Left ventricle myocardium inferior (tissue), 1 donor: ENCODE measurements at regions of chr17 and their contacts with region 1.

Region 1: DNA sequence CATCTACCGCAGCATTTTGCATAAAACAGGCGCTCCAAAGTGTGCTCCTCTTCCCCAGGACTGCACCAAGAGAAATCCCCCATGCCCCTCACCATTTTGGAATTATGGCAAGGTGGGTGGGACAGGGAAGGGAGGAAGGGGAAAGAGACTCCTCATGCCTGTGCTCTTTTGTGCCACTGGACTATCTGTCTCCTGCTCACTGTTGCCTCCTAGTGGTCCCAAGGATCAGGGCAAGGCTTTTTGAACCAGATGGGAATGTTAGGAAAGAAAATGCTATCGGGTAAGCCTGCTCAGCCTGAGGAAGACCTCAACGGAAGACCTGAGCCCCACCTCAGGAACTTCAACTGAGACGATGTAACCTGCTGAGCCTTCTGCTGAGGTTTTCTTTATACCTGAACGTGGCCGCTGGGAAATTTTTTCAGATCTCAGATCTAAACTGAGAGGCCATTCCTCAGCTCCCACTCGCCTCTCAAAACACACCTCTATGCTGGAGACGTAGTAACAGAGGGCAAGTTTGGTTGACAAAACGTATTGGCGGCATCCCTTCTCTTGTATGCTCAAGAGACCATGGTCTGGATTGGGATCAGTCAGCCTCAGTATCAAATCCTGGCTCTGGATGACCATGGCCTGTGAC is 58.3 kb downstream of the SPACA3 start:
- DNase-seq: no peak
- H3K4me3 ChIP-seq: no peak overlapping the region
- H3K27ac ChIP-seq: no peak overlapping the region
- H3K4me1 ChIP-seq: no peaks in the 10 kb centered on the region
- H3K27me3 ChIP-seq: peaks cover 47% of the 10 kb centered on the region
- CTCF ChIP-seq: peak; percentile 82

Region 2: DNA sequence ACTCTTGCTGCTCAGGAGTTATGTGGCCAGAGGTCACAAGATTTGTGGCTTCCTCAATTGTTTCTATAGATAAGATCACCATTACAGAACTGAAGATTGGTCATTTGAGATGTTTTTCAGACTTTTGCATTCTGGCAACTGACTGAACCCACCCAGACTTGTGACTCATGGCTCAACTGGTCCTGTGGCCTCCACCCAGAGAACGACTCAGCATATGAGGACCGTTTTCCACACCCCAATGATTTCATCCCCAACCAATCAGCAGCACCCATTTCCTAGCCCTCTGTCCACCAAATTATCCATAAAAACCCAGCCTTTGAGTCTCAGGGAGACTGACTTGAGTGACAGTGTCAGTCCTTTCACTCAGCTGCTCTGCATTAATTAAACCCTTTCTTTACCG is 386.4 kb after region 1 on chr17:
- intact Hi-C with region 1: no loop called
- DNase-seq: no peak
- H3K4me3 ChIP-seq: no peak overlapping the region
- H3K27ac ChIP-seq: no peak overlapping the region
- H3K4me1 ChIP-seq: no peaks in the 10 kb centered on the region
- H3K27me3 ChIP-seq: no peaks in the 10 kb centered on the region
- CTCF ChIP-seq: no peak

Region 3: DNA sequence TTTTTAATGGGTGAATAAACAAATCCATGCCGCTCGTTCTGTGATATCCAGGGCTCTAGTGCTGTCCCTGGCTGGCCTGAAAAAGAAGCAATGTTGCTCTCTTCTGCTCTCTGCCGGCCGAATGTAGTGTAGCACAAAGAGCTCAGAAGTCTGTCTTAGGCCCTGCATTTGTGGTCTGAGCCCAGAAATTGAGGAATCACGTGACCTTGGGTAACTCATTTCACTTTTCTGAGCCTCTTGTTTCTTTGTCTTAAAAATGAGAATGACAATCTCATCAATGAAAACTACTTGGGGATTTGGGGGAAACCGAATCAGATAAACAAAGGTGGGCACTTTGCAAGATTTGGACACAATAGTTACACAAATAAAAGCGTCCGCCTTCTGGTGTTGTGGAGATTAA is 624.8 kb after region 1 on chr17:
- intact Hi-C with region 1: loop called (anchors 10 kb)
- DNase-seq: peak; percentile 51
- H3K4me3 ChIP-seq: no peak overlapping the region
- H3K27ac ChIP-seq: no peak overlapping the region
- H3K4me1 ChIP-seq: no peaks in the 10 kb centered on the region
- H3K27me3 ChIP-seq: peaks cover 23% of the 10 kb centered on the region
- CTCF ChIP-seq: peak; percentile 88